ENCODE measurements at regions of chr7 and their contacts with region 1.

Region 1: DNA sequence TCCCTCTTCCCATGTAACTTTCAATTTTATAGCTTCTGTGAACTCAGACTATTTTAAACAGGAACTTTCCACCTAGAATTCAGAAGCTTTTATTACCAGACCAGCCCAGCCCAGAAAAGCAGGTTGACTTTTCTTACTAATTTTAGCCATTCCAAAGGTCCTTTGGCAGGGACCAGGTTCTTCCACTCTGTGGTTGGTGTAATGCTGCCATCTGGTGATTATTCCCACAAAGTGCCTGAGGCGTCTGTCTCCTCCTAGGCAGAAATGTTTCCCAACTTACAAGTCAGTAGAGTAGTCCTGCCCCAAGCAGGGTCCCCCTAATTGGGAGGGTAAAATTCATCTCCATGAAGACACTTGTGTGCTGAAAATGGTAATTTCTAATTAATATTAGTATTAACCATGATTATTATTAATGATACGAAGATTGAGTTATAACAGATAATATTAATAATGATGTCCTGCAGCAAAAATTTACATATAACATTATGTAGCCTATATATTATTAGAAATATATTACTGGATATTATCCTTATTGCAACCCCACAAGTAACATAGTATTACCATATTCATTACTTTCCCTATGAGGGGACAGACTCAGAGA is 53.0 kb upstream of the PPP1R17 start:
- DNase-seq: peak; percentile 73 to 82 (median 76)
- ATAC-seq: peak; percentile 95
- H3K4me3 ChIP-seq: no peak overlapping the region
- H3K27ac ChIP-seq: peak overlapping the region in 3 of 4 donors; percentile 29 to 42 (median 36)
- H3K4me1 ChIP-seq: peaks cover 10% of the 10 kb centered on the region
- H3K27me3 ChIP-seq: no peaks in the 10 kb centered on the region
- CTCF ChIP-seq: peak; percentile 41 to 95 (median 88)
- POLR2A ChIP-seq: no peak

Region 2: GRCh38 chr7:31134246-31135188 is 499.5 kb before region 1 on chr7:
- intact Hi-C with region 1: loop called (anchors 10 kb)
- DNase-seq: peak; percentile 70 to 79 (median 76)
- ATAC-seq: peak; percentile 84
- H3K4me3 ChIP-seq: no peak overlapping the region
- H3K27ac ChIP-seq: no peak overlapping the region
- H3K4me1 ChIP-seq: no peaks in the 10 kb centered on the region
- H3K27me3 ChIP-seq: no peaks in the 10 kb centered on the region
- CTCF ChIP-seq: peak; percentile 44 to 79 (median 70)
- POLR2A ChIP-seq: no peak

Region 3: GRCh38 chr7:31373337-31374289 is 260.4 kb before region 1 on chr7:
- intact Hi-C with region 1: loop called (anchors 10 kb)
- DNase-seq: peak; percentile 50 to 63 (median 57)
- ATAC-seq: peak; percentile 66
- H3K4me3 ChIP-seq: no peak overlapping the region
- H3K27ac ChIP-seq: no peak overlapping the region
- H3K4me1 ChIP-seq: no peaks in the 10 kb centered on the region
- H3K27me3 ChIP-seq: no peaks in the 10 kb centered on the region
- CTCF ChIP-seq: peak in 6 of 7 experiments; percentile 54 to 62 (median 56)
- POLR2A ChIP-seq: no peak

Region 4: DNA sequence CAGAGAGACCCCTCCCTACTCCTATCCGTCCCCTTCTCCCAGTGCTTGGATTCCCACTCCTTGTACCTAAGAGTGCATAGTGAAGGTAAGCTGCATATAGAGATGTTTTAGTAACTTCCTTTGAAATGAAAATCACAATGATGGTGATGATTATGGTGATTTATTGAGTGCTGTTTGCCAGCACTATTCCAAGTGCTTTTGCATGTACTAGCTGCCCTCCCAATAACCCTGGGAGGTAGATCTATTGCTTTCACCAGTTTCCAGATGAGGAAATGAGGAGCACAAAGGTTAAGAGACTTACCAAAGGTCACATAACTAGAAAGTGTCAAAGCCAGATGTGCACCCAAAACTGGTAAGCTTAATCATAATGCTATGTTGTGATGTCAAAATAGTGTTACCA is 213.0 kb before region 1 on chr7:
- intact Hi-C with region 1: no loop called
- DNase-seq: no peak
- ATAC-seq: no peak
- H3K4me3 ChIP-seq: no peak overlapping the region
- H3K27ac ChIP-seq: no peak overlapping the region
- H3K4me1 ChIP-seq: no peaks in the 10 kb centered on the region
- H3K27me3 ChIP-seq: no peaks in the 10 kb centered on the region
- CTCF ChIP-seq: no peak
- POLR2A ChIP-seq: no peak

Region 5: DNA sequence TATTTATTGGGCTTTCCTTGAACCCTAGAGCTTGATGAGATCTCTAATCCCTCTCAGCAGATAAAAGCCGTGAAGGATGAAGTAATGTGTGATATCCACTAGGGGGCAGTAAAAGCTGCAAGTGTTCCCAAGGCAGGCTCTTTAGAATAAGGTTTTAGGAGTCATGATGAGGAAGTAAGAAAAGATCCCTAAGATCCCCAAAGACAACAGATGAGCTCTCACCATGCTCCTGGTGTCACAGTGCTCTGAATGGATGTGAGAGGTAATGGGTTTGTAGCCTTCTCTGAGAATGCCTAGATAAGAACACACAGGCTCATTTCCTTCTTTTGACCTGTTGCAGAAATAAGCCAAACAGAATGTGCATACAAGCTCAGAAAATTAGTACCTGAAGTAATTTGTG is 190.5 kb before region 1 on chr7:
- intact Hi-C with region 1: loop called (anchors 5 kb)
- DNase-seq: peak in 1 of 4 donors; percentile 20
- ATAC-seq: peak; percentile 74
- H3K4me3 ChIP-seq: no peak overlapping the region
- H3K27ac ChIP-seq: no peak overlapping the region
- H3K4me1 ChIP-seq: no peaks in the 10 kb centered on the region
- H3K27me3 ChIP-seq: no peaks in the 10 kb centered on the region
- CTCF ChIP-seq: peak; percentile 63 to 92 (median 76)
- POLR2A ChIP-seq: no peak

Measured in body of pancreas (tissue), 4 donors.